CD4-positive, alpha-beta T cell (primary cell): ENCODE measurements at regions of chr6 and their contacts with region 1.

Region 1: DNA sequence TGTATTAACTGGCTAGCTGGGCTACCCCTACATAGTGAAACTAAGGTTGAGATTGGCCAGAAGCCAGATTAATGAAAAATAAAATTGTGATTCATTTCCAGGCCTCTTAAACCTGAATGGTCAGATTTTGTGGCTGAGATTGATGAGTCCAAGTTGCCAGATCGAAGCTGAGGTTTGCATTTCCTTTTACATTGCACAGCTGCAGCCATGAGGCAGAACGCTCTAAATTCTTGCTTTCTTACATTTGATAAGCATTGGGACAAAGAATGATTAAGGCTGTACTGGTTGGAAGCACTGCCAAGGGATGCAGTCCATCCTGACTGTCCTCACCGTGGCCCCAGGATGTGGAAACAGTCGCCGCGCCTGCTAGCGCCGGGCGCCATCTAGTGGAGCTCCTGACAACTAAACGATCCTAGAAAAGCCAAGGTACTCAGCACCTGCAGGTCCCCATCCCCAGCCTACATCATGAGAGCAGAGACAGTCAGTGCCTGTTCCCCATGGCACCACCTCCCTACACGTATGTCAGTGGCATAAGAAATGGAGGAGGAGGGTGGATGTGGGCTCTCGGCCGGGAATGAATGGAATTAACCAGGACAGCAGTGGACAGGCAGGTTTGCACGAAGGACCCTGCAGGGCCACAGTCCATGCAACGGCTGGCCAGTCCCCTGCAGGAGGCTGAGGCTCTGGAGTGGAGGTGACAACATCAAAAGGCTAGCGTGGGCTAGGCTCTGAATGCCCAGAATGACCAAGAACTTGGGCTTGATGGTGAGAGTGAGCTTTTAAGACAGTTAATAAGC is 19.0 kb downstream of the PXDC1 start:
- DNase-seq: peak; percentile 40 to 80 (median 58)
- ATAC-seq: peak; percentile 78
- H3K4me3 ChIP-seq: no peak overlapping the region
- H3K4me3 Mint-ChIP-seq: no peak overlapping the region
- H3K27ac ChIP-seq: no peak overlapping the region
- H3K27ac Mint-ChIP-seq: no peak overlapping the region
- H3K4me1 ChIP-seq: peaks cover 5% of the 10 kb centered on the region
- H3K4me1 Mint-ChIP-seq: no peaks in the 10 kb centered on the region
- H3K27me3 ChIP-seq: peaks cover 0 to 2% of the 10 kb centered on the region in 2 experiments
- H3K27me3 Mint-ChIP-seq: peaks cover 37% of the 10 kb centered on the region
- CTCF ChIP-seq: peak; percentile 92

Region 2: DNA sequence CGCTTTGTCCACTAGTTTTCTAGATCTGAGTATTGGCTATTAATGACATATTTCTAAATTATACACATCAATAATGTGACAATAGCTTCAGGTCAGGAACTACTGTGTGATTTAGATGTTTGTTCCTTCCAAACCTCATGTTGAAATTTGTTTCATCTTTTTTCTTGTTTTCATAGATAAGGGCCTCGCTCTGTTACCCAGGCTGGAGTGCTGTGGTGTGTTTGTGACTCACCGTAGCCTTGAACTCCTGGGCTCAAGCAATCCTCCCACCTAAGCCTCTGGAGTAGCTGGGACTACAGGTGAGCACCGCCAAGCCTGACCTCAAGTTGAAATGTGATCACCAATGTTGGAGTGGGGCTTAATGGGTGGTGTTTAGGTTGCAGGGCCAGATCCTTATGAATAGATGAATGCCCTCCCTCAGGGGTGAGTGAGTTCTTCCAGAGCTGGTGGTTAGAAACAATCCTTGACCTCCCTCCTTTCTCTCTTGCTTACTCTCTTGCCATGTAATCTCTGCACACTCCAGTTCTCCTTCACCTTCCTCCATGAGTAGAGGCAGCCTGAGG is 738.7 kb before region 1 on chr6:
- CTCF ChIA-PET with region 1: no interaction called
- POLR2A ChIA-PET with region 1: no interaction called
- intact Hi-C with region 1: loop called in 1 of 2 experiments (anchors 2 kb)
- DNase-seq: no peak
- ATAC-seq: no peak
- H3K4me3 ChIP-seq: no peak overlapping the region
- H3K4me3 Mint-ChIP-seq: peak overlapping the region; percentile 6
- H3K27ac ChIP-seq: no peak overlapping the region
- H3K27ac Mint-ChIP-seq: no peak overlapping the region
- H3K4me1 ChIP-seq: peaks cover 19% of the 10 kb centered on the region
- H3K4me1 Mint-ChIP-seq: peaks cover 17% of the 10 kb centered on the region
- H3K27me3 ChIP-seq: no peaks in the 10 kb centered on the region
- H3K27me3 Mint-ChIP-seq: no peaks in the 10 kb centered on the region
- CTCF ChIP-seq: no peak

Region 3: GRCh38 chr6:3125815-3126214 is 606.7 kb before region 1 on chr6:
- CTCF ChIA-PET with region 1: interaction called, 7 read pairs
- POLR2A ChIA-PET with region 1: no interaction called
- intact Hi-C with region 1: loop called (anchors 2 kb)
- DNase-seq: no peak
- ATAC-seq: no peak
- H3K4me3 ChIP-seq: no peak overlapping the region
- H3K4me3 Mint-ChIP-seq: no peak overlapping the region
- H3K27ac ChIP-seq: no peak overlapping the region
- H3K27ac Mint-ChIP-seq: no peak overlapping the region
- H3K4me1 ChIP-seq: no peaks in the 10 kb centered on the region
- H3K4me1 Mint-ChIP-seq: peaks cover 4% of the 10 kb centered on the region
- H3K27me3 ChIP-seq: no peaks in the 10 kb centered on the region
- H3K27me3 Mint-ChIP-seq: no peaks in the 10 kb centered on the region
- CTCF ChIP-seq: no peak

Region 4: GRCh38 chr6:3410385-3411360 is 321.9 kb before region 1 on chr6:
- CTCF ChIA-PET with region 1: interaction called, 7 read pairs
- POLR2A ChIA-PET with region 1: no interaction called
- intact Hi-C with region 1: loop called in 1 of 2 experiments (anchors 2 kb)
- DNase-seq: peak; percentile 37 to 83 (median 56)
- ATAC-seq: peak; percentile 50
- H3K4me3 ChIP-seq: no peak overlapping the region
- H3K4me3 Mint-ChIP-seq: no peak overlapping the region
- H3K27ac ChIP-seq: no peak overlapping the region
- H3K27ac Mint-ChIP-seq: no peak overlapping the region
- H3K4me1 ChIP-seq: peaks cover 11% of the 10 kb centered on the region
- H3K4me1 Mint-ChIP-seq: peaks cover 22% of the 10 kb centered on the region
- H3K27me3 ChIP-seq: no peaks in the 10 kb centered on the region
- H3K27me3 Mint-ChIP-seq: no peaks in the 10 kb centered on the region
- CTCF ChIP-seq: peak; percentile 75